ENCODE measurements at regions of chr6 and their contacts with region 1.

Region 1: DNA sequence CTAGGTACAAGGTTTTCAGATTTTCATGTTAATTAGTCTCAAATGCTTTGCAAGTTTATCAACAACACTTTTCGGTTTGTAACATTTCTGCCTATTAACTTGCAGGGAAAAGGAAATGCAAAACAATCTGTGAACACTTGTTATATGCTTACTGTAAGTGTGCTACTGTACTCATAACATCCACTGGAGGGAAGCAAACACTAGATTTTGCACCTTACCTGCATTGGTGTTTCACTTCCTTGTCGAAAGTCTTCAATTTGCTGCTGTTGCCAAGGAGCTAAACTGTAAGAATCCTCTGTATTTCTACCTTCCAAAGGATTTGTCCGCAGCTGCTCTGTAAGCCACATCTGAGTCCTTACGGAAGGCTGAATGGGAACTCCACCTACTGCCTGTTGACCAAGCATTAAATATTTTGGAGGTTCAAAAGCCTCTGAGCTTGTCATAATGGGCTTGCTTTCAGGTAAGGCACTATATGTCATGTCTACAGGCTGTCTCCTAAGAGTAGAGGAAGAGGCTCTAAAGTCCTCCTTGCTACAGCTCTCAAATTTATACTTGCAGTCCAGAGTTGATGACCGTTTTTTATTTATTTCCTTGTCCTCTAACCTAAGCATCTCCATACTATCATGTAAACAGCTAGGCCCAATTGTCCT is 17.3 kb downstream of the PLN start:
- DNase-seq: peak; percentile 48
- ATAC-seq: peak; percentile 87
- H3K4me3 Mint-ChIP-seq: no peak overlapping the region
- H3K27ac Mint-ChIP-seq: no peak overlapping the region
- H3K4me1 Mint-ChIP-seq: peaks cover 7% of the 10 kb centered on the region
- H3K27me3 Mint-ChIP-seq: no peaks in the 10 kb centered on the region

Region 2: DNA sequence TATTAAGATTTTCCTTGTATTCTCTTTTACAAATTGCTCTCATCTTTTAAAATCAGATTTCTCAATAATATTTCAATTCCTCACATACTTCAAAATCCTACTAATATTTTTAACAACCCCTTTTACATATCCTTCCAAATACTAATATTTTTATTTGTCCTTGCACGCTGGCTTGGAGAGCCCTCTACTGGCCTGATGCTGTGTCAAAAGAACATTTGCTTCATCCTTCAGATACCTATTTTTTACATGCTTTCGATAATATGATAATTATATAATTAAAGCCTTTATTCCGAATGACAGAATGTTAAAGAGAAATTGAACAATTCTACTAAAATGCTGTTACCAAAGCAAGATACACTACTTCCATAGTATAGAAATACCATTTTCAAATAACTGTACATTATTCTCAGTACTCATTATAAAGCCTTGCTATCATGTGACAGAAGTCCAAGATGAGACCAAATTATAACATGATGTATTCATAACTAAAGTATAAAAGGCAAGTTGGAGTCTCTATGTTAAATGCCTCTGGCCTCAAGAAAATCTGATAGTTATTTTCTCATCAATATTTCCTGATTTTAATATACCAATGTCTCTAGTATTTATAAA is 56.3 kb before region 1 on chr6:
- CTCF ChIA-PET with region 1: no interaction called
- POLR2A ChIA-PET with region 1: no interaction called
- DNase-seq: no peak
- ATAC-seq: no peak
- H3K4me3 Mint-ChIP-seq: no peak overlapping the region
- H3K27ac Mint-ChIP-seq: no peak overlapping the region
- H3K4me1 Mint-ChIP-seq: no peaks in the 10 kb centered on the region
- H3K27me3 Mint-ChIP-seq: no peaks in the 10 kb centered on the region

Region 3: GRCh38 chr6:118580585-118581419 is 15.4 kb after region 1 on chr6:
- CTCF ChIA-PET with region 1: interaction called, 17 read pairs
- POLR2A ChIA-PET with region 1: no interaction called
- DNase-seq: peak; percentile 40
- ATAC-seq: peak; percentile 70
- H3K4me3 Mint-ChIP-seq: no peak overlapping the region
- H3K27ac Mint-ChIP-seq: peak overlapping the region; percentile 10
- H3K4me1 Mint-ChIP-seq: no peaks in the 10 kb centered on the region
- H3K27me3 Mint-ChIP-seq: no peaks in the 10 kb centered on the region

Region 4: DNA sequence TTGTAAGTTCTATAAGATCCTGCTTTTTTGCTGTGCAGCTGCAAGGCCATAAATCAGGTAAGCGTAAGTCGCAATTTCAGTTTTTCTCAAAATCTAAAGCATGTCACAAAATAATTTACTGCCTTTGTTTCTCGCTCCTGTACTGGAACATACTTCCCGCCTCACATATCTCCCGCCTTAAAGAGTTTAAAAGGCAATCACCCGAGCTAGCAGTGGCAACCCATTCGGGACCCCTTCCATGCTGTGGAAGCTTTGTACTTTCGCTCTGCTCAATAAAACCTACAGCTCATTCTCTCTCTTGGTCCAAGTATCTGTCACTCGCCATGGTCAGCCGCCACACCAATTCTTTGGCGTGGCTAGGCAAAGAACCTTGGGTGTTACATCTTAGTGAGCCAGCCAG is 52.0 kb after region 1 on chr6:
- CTCF ChIA-PET with region 1: interaction called, 26 read pairs
- POLR2A ChIA-PET with region 1: no interaction called
- DNase-seq: no peak
- ATAC-seq: no peak
- H3K4me3 Mint-ChIP-seq: no peak overlapping the region
- H3K27ac Mint-ChIP-seq: no peak overlapping the region
- H3K4me1 Mint-ChIP-seq: peaks cover 13% of the 10 kb centered on the region
- H3K27me3 Mint-ChIP-seq: no peaks in the 10 kb centered on the region

Region 5: GRCh38 chr6:118776607-118777549 is 211.4 kb after region 1 on chr6:
- CTCF ChIA-PET with region 1: interaction called, 33 read pairs
- POLR2A ChIA-PET with region 1: no interaction called
- DNase-seq: peak; percentile 81
- ATAC-seq: peak; percentile 87
- H3K4me3 Mint-ChIP-seq: no peak overlapping the region
- H3K27ac Mint-ChIP-seq: no peak overlapping the region
- H3K4me1 Mint-ChIP-seq: peaks cover 15% of the 10 kb centered on the region
- H3K27me3 Mint-ChIP-seq: no peaks in the 10 kb centered on the region

Region 6: GRCh38 chr6:118893807-118894424 is 328.5 kb after region 1 on chr6 and contains the start of gene ASF1A:
- CTCF ChIA-PET with region 1: interaction called, 12 read pairs
- POLR2A ChIA-PET with region 1: no interaction called
- DNase-seq: peak; percentile 97
- ATAC-seq: peak; percentile 82
- H3K4me3 Mint-ChIP-seq: peak within 1 kb of the TSS; percentile 88
- H3K27ac Mint-ChIP-seq: peak within 1 kb of the TSS; percentile 96
- H3K4me1 Mint-ChIP-seq: peaks cover 51% of the 10 kb centered on the region
- H3K27me3 Mint-ChIP-seq: no peaks in the 10 kb centered on the region
- total RNA-seq, gene ASF1A: 49.4 to 51.1 TPM